Activated CD4-positive, alpha-beta memory T cell treated with anti-CD3 and anti-CD28 coated beads for 36 hours (primary cell): ENCODE measurements at regions of chr1 and their contacts with region 1.

Region 1: DNA sequence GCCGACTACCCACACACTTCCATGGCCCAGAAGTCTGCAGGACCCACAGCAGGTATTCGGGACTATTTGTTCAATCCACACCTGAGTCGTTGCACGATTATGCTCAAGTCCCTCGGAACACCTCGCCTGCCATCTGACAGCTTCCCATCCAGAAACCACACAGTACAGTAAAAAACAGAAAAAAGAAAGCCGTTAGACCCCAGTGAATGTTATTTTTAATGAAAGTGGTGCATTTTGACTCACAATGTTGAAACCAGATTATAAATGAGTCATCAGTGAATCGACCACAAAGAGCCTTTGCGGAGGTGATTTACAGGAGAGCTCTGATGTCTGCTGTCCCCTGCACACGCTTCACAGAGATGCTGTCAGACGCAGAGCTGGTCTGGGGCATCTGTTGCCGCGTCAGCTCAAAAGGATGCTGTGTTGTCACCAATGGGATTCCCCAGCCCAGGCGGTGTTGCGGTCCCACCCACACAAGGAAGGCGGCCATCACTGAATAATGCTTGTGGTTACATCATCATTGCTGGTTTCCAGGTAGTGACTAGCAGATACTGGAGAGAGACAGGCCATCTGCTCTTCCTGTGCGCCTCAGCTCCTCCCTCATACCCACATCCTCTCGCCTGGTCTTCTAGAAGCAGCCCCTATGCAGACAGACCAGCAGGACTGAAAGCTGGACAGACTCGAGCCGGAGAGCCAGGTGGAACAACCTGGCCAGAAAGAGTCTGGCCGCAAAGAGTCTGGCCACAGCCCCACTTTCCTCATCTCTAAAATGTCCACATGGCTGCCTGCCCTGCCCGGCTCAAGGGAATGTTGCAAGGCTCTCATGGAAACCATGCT is 116.8 kb downstream of the TOMM20 start:
- DNase-seq: peak; percentile 99
- H3K4me3 Mint-ChIP-seq: peak overlapping the region; percentile 56
- H3K27ac Mint-ChIP-seq: peak overlapping the region; percentile 97
- H3K4me1 Mint-ChIP-seq: peaks cover 90% of the 10 kb centered on the region
- H3K27me3 Mint-ChIP-seq: peaks cover 2% of the 10 kb centered on the region

Region 2: DNA sequence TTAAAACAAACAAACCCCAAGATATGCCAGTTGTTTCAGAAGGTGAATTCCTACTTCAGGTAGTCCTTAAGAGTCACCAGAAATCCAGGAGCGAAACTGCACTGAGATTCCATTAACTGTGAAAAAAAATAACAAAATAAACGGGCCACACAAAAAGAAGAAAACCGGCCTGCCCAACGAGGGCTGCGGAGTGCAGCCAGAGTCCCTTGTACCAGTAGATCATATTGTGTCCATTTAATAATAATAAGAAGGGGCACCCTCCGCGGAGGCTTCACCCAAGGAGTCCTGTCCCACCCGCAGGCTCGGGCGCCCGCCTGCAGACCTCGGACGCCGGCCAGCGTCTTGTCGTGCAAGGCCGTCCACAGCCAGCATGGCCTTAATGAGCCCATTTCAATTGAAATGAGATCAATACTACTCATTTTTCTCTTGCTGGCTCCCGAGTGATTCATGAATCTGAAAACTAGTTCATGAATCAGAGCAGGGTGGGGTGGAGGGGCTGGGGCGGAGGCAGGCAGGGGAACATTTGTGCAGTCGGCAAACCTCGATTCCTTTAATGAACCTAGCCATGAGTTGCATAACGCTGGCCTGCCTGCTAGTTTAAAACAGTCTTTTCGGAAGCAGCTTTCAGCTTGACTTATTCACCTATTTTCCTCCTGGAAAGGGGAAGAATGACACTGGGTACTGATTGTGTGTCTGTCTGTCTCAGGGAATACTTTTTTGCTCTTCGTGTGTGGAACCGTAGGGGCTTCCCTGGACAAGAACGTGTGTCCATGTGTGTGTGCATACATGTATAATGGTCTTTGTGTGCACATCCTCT is 288.7 kb before region 1 on chr1:
- CTCF ChIA-PET with region 1: interaction called, 8 read pairs
- POLR2A ChIA-PET with region 1: interaction called, 27 read pairs
- intact Hi-C with region 1: loop called (anchors 1 kb)
- DNase-seq: peak; percentile 91
- H3K4me3 Mint-ChIP-seq: peak overlapping the region; percentile 60
- H3K27ac Mint-ChIP-seq: peak overlapping the region; percentile 96
- H3K4me1 Mint-ChIP-seq: peaks cover 66% of the 10 kb centered on the region
- H3K27me3 Mint-ChIP-seq: no peaks in the 10 kb centered on the region

Region 3: GRCh38 chr1:234842726-234843641 is 168.8 kb before region 1 on chr1:
- CTCF ChIA-PET with region 1: interaction called, 6 read pairs
- POLR2A ChIA-PET with region 1: interaction called, 36 read pairs
- intact Hi-C with region 1: loop called (anchors 1 kb)
- DNase-seq: peak; percentile 93
- H3K4me3 Mint-ChIP-seq: peak overlapping the region; percentile 71
- H3K27ac Mint-ChIP-seq: peak overlapping the region; percentile 99
- H3K4me1 Mint-ChIP-seq: peaks cover 87% of the 10 kb centered on the region
- H3K27me3 Mint-ChIP-seq: no peaks in the 10 kb centered on the region

Region 4: GRCh38 chr1:234933475-234933874 is 78.3 kb before region 1 on chr1:
- CTCF ChIA-PET with region 1: no interaction called
- POLR2A ChIA-PET with region 1: interaction called, 4 read pairs
- intact Hi-C with region 1: loop called (anchors 1 kb)
- DNase-seq: peak; percentile 63
- H3K4me3 Mint-ChIP-seq: no peak overlapping the region
- H3K27ac Mint-ChIP-seq: peak overlapping the region; percentile 86
- H3K4me1 Mint-ChIP-seq: peaks cover 66% of the 10 kb centered on the region
- H3K27me3 Mint-ChIP-seq: no peaks in the 10 kb centered on the region

Region 5: GRCh38 chr1:234978397-234979295 is 33.2 kb before region 1 on chr1:
- CTCF ChIA-PET with region 1: interaction called, 15 read pairs
- POLR2A ChIA-PET with region 1: interaction called, 42 read pairs
- intact Hi-C with region 1: loop called (anchors 1 kb)
- DNase-seq: peak; percentile 86
- H3K4me3 Mint-ChIP-seq: peak overlapping the region; percentile 90
- H3K27ac Mint-ChIP-seq: peak overlapping the region; percentile 97
- H3K4me1 Mint-ChIP-seq: peaks cover 80% of the 10 kb centered on the region
- H3K27me3 Mint-ChIP-seq: no peaks in the 10 kb centered on the region

Region 6: DNA sequence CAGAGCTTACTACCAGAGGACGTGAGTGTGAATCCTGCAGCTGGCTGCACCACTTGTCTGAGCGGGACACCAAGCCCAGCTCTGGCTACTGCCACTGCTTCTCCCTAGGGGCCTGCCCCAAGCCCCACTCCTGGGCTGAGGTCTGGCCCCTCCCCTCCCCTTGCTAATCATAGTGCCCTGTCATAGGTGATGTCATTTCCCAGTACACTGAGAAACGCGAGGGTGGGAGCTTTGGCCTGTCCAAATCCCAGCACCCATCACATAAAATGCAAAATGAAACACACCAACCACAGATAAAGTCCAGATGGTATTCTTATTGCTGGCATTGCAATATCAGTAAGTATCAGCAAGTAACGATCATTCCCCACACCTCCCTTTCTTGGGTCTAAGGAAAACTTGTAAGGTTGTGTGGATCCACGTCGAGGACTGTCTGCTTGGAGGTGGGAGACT is 39.1 kb after region 1 on chr1:
- CTCF ChIA-PET with region 1: interaction called, 4 read pairs
- POLR2A ChIA-PET with region 1: interaction called, 20 read pairs
- intact Hi-C with region 1: loop called (anchors 1 kb)
- DNase-seq: peak; percentile 76
- H3K4me3 Mint-ChIP-seq: no peak overlapping the region
- H3K27ac Mint-ChIP-seq: peak overlapping the region; percentile 74
- H3K4me1 Mint-ChIP-seq: peaks cover 51% of the 10 kb centered on the region
- H3K27me3 Mint-ChIP-seq: no peaks in the 10 kb centered on the region

Region 7: GRCh38 chr1:235532360-235532759 is 520.5 kb after region 1 on chr1:
- CTCF ChIA-PET with region 1: no interaction called
- POLR2A ChIA-PET with region 1: no interaction called
- intact Hi-C with region 1: no loop called
- DNase-seq: no peak
- H3K4me3 Mint-ChIP-seq: no peak overlapping the region
- H3K27ac Mint-ChIP-seq: no peak overlapping the region
- H3K4me1 Mint-ChIP-seq: no peaks in the 10 kb centered on the region
- H3K27me3 Mint-ChIP-seq: no peaks in the 10 kb centered on the region